ENCODE measurements at regions of chr4 and their contacts with region 1.

Region 1: DNA sequence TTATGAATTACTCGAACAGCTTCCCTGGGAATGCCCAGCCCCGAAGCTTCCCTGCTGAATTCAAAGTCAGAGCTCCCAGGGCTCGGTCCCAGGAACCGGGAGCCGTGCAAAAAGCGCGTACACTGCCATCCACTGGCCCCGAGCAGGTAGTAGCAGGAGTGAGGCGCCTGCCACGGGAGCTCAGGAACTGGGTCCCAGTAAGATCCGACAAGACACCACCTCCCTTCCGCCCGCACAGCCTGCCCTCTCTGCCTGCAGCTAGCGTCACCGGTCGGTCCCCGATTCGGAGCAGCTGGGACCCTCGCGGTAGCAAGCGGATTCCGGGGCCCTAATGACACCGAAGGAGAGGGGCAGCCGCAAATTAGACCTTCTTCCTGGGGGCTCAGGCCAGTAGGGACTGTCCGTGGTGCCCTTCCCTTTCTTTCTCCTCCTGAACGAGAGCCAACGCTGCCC is 1.2 kb downstream of the CORIN start:
- DNase-seq: peak; percentile 88
- H3K4me3 ChIP-seq: peak overlapping the region; percentile 60 to 67
- H3K27ac ChIP-seq: peak overlapping the region in 1 of 2 experiments; percentile 43; a peak in 1 of 4 replicates
- H3K4me1 ChIP-seq: peaks cover 0 to 9% of the 10 kb centered on the region in 2 experiments; a peak in 2 of 4 replicates
- H3K27me3 ChIP-seq: no peaks in the 10 kb centered on the region
- CTCF ChIP-seq: peak; percentile 74
- EP300 ChIP-seq: no peak
- RAD21 ChIP-seq: peak; percentile 93

Region 2: DNA sequence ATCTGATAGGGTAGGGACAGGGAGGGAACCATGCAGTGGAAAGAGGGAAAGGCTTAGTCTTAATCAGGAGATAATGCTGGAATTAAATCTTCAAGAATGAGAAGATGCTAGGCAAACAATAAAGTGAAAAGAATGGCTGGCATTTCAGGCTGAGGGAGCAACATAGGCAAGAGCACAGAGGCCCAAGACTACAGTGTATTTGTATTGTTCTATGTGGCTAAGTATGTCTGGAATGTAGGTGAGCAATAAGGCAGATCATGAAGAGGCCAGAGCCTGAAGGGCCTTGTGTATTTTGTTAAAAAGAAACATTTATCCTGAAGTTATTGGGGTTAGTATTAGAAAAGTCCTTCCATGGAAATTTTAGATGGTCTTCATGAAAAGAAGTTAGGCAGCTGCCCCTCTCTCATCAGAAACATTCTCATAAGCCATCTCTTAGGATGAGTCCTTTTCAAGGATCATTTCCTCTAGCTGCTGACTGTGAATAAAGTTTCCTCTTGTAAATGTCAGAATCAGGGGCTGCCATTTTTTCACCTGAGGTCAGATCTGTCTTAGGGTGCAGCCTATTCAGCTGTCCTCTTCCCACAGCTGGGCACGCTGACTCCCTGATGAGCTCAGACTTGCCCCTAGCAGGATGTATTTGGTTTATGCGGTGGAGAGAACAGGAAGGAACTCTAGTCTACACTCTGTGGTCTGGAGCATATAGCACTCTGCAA is 305.3 kb before region 1 on chr4:
- CTCF ChIA-PET with region 1: no interaction called
- POLR2A ChIA-PET with region 1: no interaction called
- DNase-seq: no peak
- H3K4me3 ChIP-seq: no peak overlapping the region
- H3K27ac ChIP-seq: peak overlapping the region; percentile 41 to 93; a peak in 3 of 4 replicates
- H3K4me1 ChIP-seq: peaks cover 8 to 29% of the 10 kb centered on the region in 2 experiments; a peak in 3 of 4 replicates
- H3K27me3 ChIP-seq: no peaks in the 10 kb centered on the region
- CTCF ChIP-seq: no peak
- EP300 ChIP-seq: no peak
- RAD21 ChIP-seq: no peak

Region 3: GRCh38 chr4:47675806-47676205 is 160.9 kb before region 1 on chr4:
- CTCF ChIA-PET with region 1: interaction called, 58 read pairs
- POLR2A ChIA-PET with region 1: no interaction called
- DNase-seq: no peak
- H3K4me3 ChIP-seq: no peak overlapping the region
- H3K27ac ChIP-seq: no peak overlapping the region
- H3K4me1 ChIP-seq: peaks cover 0 to 2% of the 10 kb centered on the region in 2 experiments; a peak in 1 of 4 replicates
- H3K27me3 ChIP-seq: no peaks in the 10 kb centered on the region
- CTCF ChIP-seq: no peak
- EP300 ChIP-seq: no peak
- RAD21 ChIP-seq: no peak

Region 4: DNA sequence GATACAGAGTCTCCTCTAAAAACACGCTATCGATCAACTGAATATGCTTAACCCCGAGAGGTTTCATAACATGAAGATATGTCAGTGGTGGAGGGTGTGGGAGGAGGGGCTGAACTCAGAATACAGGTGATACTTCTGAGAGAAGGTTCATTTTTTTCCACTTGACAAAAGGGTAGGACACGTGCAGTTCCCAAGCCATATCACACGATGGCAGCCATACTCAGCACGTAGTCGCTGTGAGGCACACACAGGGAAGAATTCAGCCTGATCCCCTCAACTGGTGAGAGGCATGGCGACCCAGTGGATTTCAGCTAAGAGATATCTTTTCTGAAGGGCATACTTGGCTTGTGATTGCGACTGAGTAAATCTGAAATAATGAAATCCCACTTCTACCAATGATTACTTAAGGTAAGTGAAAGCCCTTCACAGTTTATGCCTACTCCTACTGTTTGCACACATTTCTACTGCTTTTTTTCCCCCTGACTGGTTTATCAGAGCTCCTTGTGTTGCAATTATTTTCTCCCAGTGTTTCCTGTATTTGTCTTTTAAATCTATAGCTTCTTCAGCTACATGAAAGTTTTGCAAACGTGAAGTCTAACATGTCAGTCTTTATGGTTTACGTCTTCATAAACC is 131.9 kb before region 1 on chr4:
- CTCF ChIA-PET with region 1: interaction called, 417 read pairs
- POLR2A ChIA-PET with region 1: interaction called, 7 read pairs
- DNase-seq: peak; percentile 58
- H3K4me3 ChIP-seq: no peak overlapping the region
- H3K27ac ChIP-seq: no peak overlapping the region
- H3K4me1 ChIP-seq: peaks cover 0 to 4% of the 10 kb centered on the region in 2 experiments; a peak in 3 of 4 replicates
- H3K27me3 ChIP-seq: no peaks in the 10 kb centered on the region
- CTCF ChIP-seq: peak; percentile 46
- EP300 ChIP-seq: no peak
- RAD21 ChIP-seq: peak; percentile 92

Region 5: DNA sequence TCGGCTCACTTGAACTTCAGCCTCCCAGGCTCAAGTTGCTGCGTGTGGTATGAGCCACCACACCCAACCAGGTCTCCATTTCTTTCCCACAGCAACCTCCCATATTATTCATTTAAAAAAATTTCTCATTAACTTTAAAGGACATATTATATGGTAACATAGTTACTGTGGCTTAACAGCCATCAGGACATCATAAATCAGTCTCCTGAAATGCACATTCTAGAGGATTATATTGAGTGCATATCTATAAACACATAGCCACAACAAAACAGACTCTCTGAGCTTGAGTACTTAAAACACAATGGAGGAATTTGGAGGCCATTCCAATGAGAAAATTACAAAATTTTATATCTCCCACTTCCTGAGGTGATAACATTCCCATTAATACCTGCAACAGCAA is 60.3 kb before region 1 on chr4:
- CTCF ChIA-PET with region 1: interaction called, 11 read pairs
- POLR2A ChIA-PET with region 1: no interaction called
- DNase-seq: no peak
- H3K4me3 ChIP-seq: no peak overlapping the region
- H3K27ac ChIP-seq: no peak overlapping the region
- H3K4me1 ChIP-seq: no peaks in the 10 kb centered on the region
- H3K27me3 ChIP-seq: no peaks in the 10 kb centered on the region
- CTCF ChIP-seq: no peak
- EP300 ChIP-seq: no peak
- RAD21 ChIP-seq: no peak

Region 6: DNA sequence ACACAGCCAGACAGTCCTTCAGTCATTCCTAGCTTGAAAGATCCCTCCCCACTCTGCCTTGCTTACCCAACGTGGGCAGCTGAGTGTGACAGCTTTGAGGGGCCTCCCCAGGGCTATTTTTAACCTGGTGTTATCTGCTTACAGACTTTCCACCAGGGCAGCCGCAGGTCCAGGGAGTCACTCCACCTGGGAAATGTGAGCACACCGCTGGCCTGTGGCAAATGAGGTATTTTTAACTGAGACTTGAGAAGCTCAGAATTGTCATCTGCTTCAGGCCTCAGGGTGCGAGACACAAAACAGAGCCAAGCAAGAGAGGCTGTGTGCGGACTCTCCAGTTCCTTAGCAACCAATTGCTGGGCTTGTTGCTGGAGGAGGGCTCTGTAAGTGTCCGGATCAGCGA is 11.8 kb before region 1 on chr4:
- CTCF ChIA-PET with region 1: interaction called, 23 read pairs
- POLR2A ChIA-PET with region 1: interaction called, 3 read pairs
- DNase-seq: peak; percentile 38
- H3K4me3 ChIP-seq: no peak overlapping the region
- H3K27ac ChIP-seq: peak overlapping the region in 1 of 2 experiments; percentile 7; a peak in 1 of 4 replicates
- H3K4me1 ChIP-seq: peaks cover 0 to 9% of the 10 kb centered on the region in 2 experiments; a peak in 1 of 4 replicates
- H3K27me3 ChIP-seq: no peaks in the 10 kb centered on the region
- CTCF ChIP-seq: no peak
- EP300 ChIP-seq: no peak
- RAD21 ChIP-seq: no peak

Region 7: GRCh38 chr4:48141048-48141447 is 304.4 kb after region 1 on chr4:
- CTCF ChIA-PET with region 1: no interaction called
- POLR2A ChIA-PET with region 1: no interaction called
- DNase-seq: peak; percentile 48
- H3K4me3 ChIP-seq: no peak overlapping the region; a peak in 1 of 4 replicates
- H3K27ac ChIP-seq: no peak overlapping the region
- H3K4me1 ChIP-seq: peaks cover 0 to 17% of the 10 kb centered on the region in 2 experiments; a peak in 1 of 4 replicates
- H3K27me3 ChIP-seq: no peaks in the 10 kb centered on the region
- CTCF ChIP-seq: peak; percentile 71
- EP300 ChIP-seq: no peak
- RAD21 ChIP-seq: peak; percentile 70

Measured in SK-N-SH (cell line).